ENCODE measurements at regions of chr3 and their contacts with region 1.

Region 1: GRCh38 chr3:30693470-30694120 is 87.2 kb downstream of the TGFBR2 start:
- DNase-seq: peak; percentile 60
- ATAC-seq: peak; percentile 93
- H3K4me3 Mint-ChIP-seq: no peak overlapping the region
- H3K27ac Mint-ChIP-seq: no peak overlapping the region
- H3K4me1 Mint-ChIP-seq: peaks cover 34% of the 10 kb centered on the region
- H3K27me3 Mint-ChIP-seq: no peaks in the 10 kb centered on the region

Region 2: DNA sequence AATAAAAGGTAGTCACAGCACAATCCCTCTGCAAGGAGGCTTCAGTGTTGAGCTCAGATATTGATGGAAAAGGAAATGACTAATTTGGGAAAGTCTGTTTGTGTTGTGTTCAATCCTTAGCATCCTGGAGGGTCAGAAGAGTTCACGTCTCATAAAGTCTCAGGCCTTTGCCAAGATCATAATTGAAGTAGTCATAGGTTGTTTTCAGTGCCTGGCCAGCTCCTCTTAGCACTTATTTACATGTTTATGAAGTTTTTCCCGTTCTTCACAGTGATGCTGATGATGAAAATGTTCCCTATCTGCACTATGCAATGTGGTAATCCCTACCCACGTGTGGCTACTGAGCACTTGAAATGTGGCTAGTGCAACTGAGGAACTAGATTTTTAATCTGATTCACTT is 148.8 kb before region 1 on chr3:
- CTCF ChIA-PET with region 1: no interaction called
- DNase-seq: no peak
- ATAC-seq: no peak
- H3K4me3 Mint-ChIP-seq: no peak overlapping the region
- H3K27ac Mint-ChIP-seq: no peak overlapping the region
- H3K4me1 Mint-ChIP-seq: no peaks in the 10 kb centered on the region
- H3K27me3 Mint-ChIP-seq: no peaks in the 10 kb centered on the region

Region 3: DNA sequence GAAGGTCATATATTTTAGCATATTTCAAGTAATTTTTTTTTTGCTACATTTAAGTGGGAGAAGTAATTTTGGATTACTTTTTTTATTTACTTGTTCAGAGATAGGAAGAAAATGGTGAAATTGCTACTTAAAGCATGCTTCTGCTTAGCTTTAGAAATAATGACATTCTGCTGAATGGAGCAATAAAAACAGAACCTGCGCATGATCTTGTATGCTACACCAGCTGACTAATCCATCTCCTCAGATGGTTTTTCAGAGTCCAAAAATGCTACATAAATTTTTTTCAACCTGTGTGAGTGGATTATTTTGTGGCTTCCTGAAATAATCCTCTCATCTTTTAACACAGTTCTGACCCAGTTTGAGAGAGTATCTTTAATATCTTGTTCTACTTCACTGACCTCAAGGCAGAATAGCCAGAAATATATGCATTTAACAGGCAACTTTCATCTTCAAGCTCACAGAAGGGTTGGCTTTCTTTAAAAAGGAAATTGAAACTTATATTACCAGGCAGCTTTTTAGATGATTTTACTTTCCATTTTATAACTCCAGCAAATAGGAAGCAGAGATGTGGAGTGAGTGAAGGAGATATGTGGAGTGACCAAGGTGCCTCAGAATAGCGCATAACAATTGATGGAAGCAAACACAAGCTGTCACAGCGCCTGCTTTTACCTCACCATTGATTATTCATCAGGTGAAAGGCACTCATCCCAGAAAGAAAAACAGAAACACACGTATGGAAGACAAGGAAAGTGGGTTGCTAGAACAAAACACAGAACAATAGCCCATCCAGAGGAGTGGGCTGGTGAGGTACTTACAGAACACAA is 49.4 kb after region 1 on chr3:
- CTCF ChIA-PET with region 1: interaction called, 10 read pairs
- DNase-seq: no peak
- ATAC-seq: peak; percentile 36
- H3K4me3 Mint-ChIP-seq: no peak overlapping the region
- H3K27ac Mint-ChIP-seq: peak overlapping the region; percentile 39
- H3K4me1 Mint-ChIP-seq: peaks cover 21% of the 10 kb centered on the region
- H3K27me3 Mint-ChIP-seq: no peaks in the 10 kb centered on the region